Panc1 (cell line): ENCODE measurements at regions of chr10 and their contacts with region 1.

Region 1: DNA sequence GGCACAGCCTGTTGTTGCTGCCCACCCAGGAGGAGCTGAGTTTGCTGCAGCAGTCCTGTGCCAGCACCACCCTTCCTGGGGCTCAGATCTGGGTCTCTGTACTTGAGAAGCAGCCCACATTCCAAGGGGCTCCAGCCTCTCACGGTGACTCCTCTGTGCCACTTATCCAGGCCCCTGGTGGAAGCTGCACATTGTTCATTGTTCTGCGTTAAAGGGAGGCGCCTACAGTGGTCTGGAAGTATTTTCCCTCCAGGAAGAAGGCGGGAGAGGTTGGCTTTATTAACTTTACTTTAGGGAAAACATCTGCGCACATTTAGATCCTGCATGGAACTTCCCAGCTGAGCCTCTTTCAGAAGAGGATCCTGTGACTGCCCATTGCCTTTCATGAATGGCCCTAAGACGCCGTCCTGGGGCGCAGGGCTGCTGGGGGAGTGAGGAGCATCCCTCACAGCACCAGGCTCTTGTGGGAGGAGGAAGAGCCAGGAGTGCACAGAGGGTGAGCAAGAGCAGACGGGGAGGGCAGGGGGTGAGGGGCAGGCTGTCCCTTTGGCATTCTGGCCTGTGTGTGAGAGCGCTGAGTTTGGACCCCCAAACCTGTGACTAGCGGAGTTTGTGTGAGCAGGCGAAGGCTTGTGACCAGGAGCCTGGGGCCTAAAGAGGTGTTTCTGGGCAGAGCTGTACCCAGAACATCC is 98.6 kb upstream of the BTBD16 start:
- DNase-seq: no peak
- ATAC-seq: no peak
- H3K4me3 ChIP-seq: no peak overlapping the region
- H3K27ac ChIP-seq: no peak overlapping the region
- H3K4me1 ChIP-seq: peaks cover 19% of the 10 kb centered on the region; the same call in 1 of the 2 replicates
- H3K27me3 ChIP-seq: no peaks in the 10 kb centered on the region
- CTCF ChIP-seq: no peak

Region 2: DNA sequence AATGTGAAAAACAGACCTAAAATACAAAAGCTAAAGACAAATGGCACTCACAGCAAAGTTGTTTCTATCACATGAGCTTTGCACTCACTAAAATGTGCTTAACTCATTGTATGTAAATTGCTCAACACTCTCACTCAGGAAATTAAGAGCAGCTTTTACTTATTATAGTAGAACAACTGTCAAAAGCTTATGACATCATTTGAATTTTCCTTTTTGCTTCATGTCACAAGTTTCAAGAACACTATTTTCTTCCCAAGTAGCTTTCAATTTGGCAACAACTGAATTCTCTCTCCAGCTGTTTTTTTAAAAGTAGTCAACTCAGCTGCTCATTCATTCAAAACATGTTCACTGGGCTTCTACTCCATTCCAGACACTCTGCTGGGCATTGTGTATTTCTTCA is 291.6 kb before region 1 on chr10:
- CTCF ChIA-PET with region 1: no interaction called
- POLR2A ChIA-PET with region 1: no interaction called
- in situ Hi-C with region 1: no loop called
- intact Hi-C with region 1: no loop called
- DNase-seq: no peak
- ATAC-seq: no peak
- H3K4me3 ChIP-seq: no peak overlapping the region
- H3K27ac ChIP-seq: no peak overlapping the region
- H3K4me1 ChIP-seq: no peaks in the 10 kb centered on the region
- H3K27me3 ChIP-seq: no peaks in the 10 kb centered on the region
- CTCF ChIP-seq: no peak

Region 3: GRCh38 chr10:122154545-122155366 is 17.7 kb before region 1 on chr10:
- CTCF ChIA-PET with region 1: no interaction called
- POLR2A ChIA-PET with region 1: interaction called, 14 read pairs
- in situ Hi-C with region 1: no loop called
- intact Hi-C with region 1: no loop called
- DNase-seq: no peak
- ATAC-seq: no peak
- H3K4me3 ChIP-seq: no peak overlapping the region
- H3K27ac ChIP-seq: no peak overlapping the region
- H3K4me1 ChIP-seq: no peaks in the 10 kb centered on the region; the same call in 1 of the 2 replicates
- H3K27me3 ChIP-seq: no peaks in the 10 kb centered on the region
- CTCF ChIP-seq: no peak

Region 4: GRCh38 chr10:122352817-122353525 is 180.5 kb after region 1 on chr10:
- CTCF ChIA-PET with region 1: no interaction called
- POLR2A ChIA-PET with region 1: no interaction called
- in situ Hi-C with region 1: no loop called
- intact Hi-C with region 1: no loop called
- DNase-seq: no peak
- ATAC-seq: no peak
- H3K4me3 ChIP-seq: no peak overlapping the region
- H3K27ac ChIP-seq: no peak overlapping the region
- H3K4me1 ChIP-seq: 0 out of 2 replicates have a peak, but pooled peaks cover 3% of the 10 kb centered on the region
- H3K27me3 ChIP-seq: no peaks in the 10 kb centered on the region
- CTCF ChIP-seq: no peak

Region 5: DNA sequence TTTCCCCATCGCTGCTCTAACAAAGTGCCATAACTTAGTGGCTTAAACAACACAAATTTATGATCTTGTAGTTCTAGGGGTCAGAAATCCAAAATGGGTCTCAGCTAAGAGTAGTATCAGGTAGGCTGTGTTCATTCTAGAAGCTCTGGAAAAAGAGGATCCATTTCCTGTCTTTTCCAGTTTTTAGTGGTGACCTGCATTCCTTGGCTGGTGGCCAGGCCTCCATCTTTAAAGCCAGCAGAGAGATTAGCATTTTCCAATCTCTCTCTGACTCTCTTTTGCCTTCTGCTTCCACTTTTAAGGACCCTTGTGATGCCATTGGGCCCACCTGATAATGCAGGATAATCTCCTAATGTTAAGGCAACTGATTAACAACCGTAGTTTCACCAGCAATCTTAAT is 568.2 kb after region 1 on chr10:
- CTCF ChIA-PET with region 1: no interaction called
- POLR2A ChIA-PET with region 1: no interaction called
- in situ Hi-C with region 1: no loop called
- intact Hi-C with region 1: no loop called
- DNase-seq: no peak
- ATAC-seq: no peak
- H3K4me3 ChIP-seq: no peak overlapping the region
- H3K27ac ChIP-seq: no peak overlapping the region
- H3K4me1 ChIP-seq: no peaks in the 10 kb centered on the region
- H3K27me3 ChIP-seq: peaks cover 12% of the 10 kb centered on the region
- CTCF ChIP-seq: no peak